Breast epithelium (tissue), 4 donors: ENCODE measurements at regions of chr7 and their contacts with region 1.

Region 1: GRCh38 chr7:92567460-92567859 is 22.7 kb downstream of the FAM133B start:
- DNase-seq: no peak
- H3K4me3 ChIP-seq: no peak overlapping the region
- H3K27ac ChIP-seq: no peak overlapping the region
- H3K4me1 ChIP-seq: no peaks in the 10 kb centered on the region
- H3K27me3 ChIP-seq: no peaks in the 10 kb centered on the region
- CTCF ChIP-seq: no peak
- POLR2A ChIP-seq: no peak

Region 2: DNA sequence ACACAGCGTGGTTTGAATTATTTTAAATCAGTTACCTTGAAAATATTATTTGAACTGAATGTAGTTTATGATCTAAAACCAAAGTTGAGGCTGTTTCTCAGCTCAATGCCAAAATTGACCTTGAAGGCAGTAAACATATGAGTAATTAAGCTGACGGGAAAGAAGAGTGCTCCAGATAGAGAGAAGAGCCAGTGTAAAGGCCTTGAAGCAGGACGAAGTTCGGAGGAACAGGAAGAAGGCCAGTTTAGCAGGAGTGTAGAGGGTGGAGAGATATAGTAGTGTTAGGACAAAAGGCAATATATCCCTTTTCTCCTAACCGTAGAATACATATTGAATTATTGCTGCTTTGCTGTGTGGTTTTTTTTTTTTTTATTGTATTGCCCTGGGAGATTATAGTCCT is 496.4 kb before region 1 on chr7:
- intact Hi-C with region 1: loop called (anchors 5 kb)
- DNase-seq: no peak
- H3K4me3 ChIP-seq: no peak overlapping the region
- H3K27ac ChIP-seq: no peak overlapping the region
- H3K4me1 ChIP-seq: no peaks in the 10 kb centered on the region
- H3K27me3 ChIP-seq: no peaks in the 10 kb centered on the region
- CTCF ChIP-seq: no peak
- POLR2A ChIP-seq: no peak

Region 3: GRCh38 chr7:92534572-92534971 is 32.9 kb before region 1 on chr7:
- intact Hi-C with region 1: no loop called
- DNase-seq: no peak
- H3K4me3 ChIP-seq: no peak overlapping the region
- H3K27ac ChIP-seq: no peak overlapping the region
- H3K4me1 ChIP-seq: peaks cover 0 to 11% of the 10 kb centered on the region in 2 donors
- H3K27me3 ChIP-seq: no peaks in the 10 kb centered on the region
- CTCF ChIP-seq: no peak
- POLR2A ChIP-seq: no peak